Gastrocnemius medialis (tissue), 4 donors: ENCODE measurements at regions of chr18 and their contacts with region 1.

Region 1: DNA sequence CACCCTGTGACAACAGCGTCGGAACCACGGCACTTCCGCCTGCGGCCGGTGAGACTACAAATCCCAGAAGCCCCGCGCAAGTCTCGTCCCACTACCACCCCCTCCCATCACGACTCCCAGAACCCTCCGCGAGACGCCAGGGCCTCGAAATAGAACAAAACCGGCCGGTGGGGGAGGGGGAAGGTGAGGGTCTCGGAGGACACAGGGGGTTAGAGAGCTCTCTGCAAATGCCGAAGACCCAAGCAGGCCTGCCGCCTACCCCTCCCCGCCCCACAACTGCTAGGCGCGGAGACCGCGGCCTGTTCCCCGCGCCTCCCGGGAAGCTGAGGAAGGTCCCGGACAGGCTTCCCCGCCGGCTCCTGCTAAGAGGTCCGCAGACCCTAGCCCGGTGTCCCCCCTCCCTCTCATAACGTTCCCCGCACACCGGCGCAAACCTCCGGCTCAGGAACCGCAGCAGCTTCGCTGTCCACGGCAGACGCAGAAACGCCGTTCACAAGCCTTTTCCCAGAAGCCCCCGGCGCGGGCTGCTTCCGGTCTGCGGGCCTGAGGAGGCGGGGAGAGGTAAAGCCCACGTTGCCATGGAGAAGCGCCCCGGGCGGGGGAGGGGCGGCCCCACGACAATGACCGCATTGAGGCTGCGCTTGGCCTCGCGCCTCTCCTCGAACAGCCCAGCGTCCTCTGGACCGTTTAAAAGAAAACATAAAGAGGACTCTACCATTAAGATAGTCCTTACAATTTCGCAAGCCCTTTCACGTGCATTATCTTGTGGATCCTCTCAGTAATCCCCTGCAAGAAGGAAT is at the start of gene ZNF24:
- DNase-seq: peak; percentile 93 to 94
- ATAC-seq: peak; percentile 95
- H3K4me3 ChIP-seq: peak within 1 kb of the TSS; percentile 67 to 100 (median 92)
- H3K27ac ChIP-seq: peak within 1 kb of the TSS; percentile 99 to 100 (median 99)
- H3K4me1 ChIP-seq: peaks cover 48 to 51% of the 10 kb centered on the region in 2 donors
- H3K27me3 ChIP-seq: no peaks in the 10 kb centered on the region
- CTCF ChIP-seq: no peak
- POLR2A ChIP-seq: peak; percentile 79 to 83
- total RNA-seq, gene ZNF24: 30.5 to 50.7 (median 36.3) TPM

Region 2: GRCh38 chr18:34999756-35000289 is 344.3 kb before region 1 on chr18:
- in situ Hi-C with region 1: loop called in 1 of 4 experiments (anchors 10 kb)
- intact Hi-C with region 1: loop called (anchors 10 kb)
- DNase-seq: peak in 1 of 2 donors; percentile 27
- ATAC-seq: peak; percentile 72 to 87
- H3K4me3 ChIP-seq: no peak overlapping the region
- H3K27ac ChIP-seq: peak overlapping the region; percentile 61 to 75 (median 68)
- H3K4me1 ChIP-seq: peaks cover 17 to 22% of the 10 kb centered on the region in 2 donors
- H3K27me3 ChIP-seq: no peaks in the 10 kb centered on the region
- CTCF ChIP-seq: no peak
- POLR2A ChIP-seq: no peak

Region 3: GRCh38 chr18:35231052-35231451 is 113.1 kb before region 1 on chr18:
- in situ Hi-C with region 1: loop called in 1 of 4 experiments (anchors 5 kb)
- intact Hi-C with region 1: no loop called
- DNase-seq: peak; percentile 65 to 77
- ATAC-seq: peak; percentile 99
- H3K4me3 ChIP-seq: peak overlapping the region; percentile 16 to 49 (median 28)
- H3K27ac ChIP-seq: no peak overlapping the region
- H3K4me1 ChIP-seq: no peaks in the 10 kb centered on the region
- H3K27me3 ChIP-seq: no peaks in the 10 kb centered on the region
- CTCF ChIP-seq: peak; percentile 80 to 96 (median 83)
- POLR2A ChIP-seq: no peak

Region 4: DNA sequence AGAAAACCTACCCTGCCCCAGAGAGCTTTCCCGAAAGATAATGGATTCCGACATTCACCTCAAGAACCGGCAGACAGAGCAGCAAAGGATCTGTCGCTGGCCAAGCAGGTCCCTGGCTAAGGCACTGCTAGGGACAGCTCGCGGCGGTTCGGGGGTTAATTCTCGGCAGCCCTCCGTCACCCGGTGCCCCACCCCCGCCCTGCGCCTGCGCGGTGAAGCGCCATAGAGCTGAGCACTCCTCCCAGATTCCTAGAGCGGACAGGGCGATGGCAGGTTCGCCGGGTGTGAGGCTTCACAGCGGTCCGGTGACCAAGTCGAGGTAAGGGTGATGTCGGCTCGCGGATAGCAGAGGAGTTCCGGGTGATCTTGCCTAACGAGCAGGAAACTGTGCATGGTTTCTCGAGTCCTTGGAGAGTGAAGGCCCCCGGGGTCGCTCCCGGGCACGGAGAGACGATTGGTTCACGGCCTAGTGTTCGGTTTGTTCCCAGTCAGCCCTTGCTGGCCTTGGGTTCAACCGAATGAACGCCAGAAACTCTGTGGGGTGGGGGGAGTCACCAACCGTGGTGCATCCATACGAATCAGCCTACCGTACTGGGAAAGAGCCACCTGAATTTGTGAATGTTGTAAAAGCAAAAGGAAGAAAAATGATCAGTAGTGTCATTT is 53.9 kb before region 1 on chr18 and contains the start of gene ZSCAN30:
- in situ Hi-C with region 1: loop called in 2 of 4 experiments (anchors 5 to 10 kb)
- intact Hi-C with region 1: loop called (anchors 2 kb)
- DNase-seq: peak; percentile 88 to 95
- ATAC-seq: peak; percentile 98
- H3K4me3 ChIP-seq: peak within 1 kb of the TSS; percentile 62 to 88 (median 80)
- H3K27ac ChIP-seq: peak within 1 kb of the TSS; percentile 88 to 92 (median 90)
- H3K4me1 ChIP-seq: peaks cover 21 to 30% of the 10 kb centered on the region in 2 donors
- H3K27me3 ChIP-seq: no peaks in the 10 kb centered on the region
- CTCF ChIP-seq: peak in 1 of 5 experiments; percentile 24
- POLR2A ChIP-seq: peak; percentile 51 to 60
- total RNA-seq, gene ZSCAN30: 4.6 to 34.6 (median 8.2) TPM

Region 5: DNA sequence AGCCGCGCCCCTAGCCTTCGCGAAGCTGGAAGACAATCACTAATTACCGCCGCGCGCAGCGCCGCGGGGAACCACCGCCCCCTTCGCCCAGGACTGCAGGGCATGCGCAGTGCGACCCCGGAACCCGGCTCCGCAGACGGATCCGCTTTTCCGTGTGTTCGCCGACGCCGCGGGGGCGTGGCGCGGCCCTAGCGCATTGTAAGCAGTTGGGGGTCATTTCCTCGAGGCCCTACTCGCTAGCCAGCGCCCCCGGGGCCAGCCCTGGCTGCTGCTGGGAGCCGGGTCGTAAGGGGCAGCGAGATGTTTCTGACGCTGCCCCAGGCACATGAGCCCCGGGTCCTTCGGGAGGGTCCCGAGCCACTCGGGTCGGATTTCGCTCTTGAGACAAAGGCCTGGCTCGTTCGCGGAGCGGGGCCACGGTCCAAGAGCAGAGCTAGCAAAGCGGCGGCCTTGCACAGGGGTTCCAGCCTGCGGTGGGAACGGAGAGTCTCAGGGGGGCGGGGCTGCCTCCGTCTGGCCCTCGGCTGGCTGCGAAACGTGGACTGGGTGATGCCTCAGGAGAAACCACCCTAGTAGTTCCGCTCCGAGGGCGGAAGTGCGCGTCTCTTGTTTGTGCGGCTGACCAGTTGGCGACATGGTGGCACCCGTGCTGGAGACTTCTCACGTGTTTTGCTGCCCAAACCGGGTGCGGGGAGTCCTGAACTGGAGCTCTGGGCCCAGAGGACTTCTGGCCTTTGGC is 785.3 kb after region 1 on chr18 and contains the starts of genes ELP2 and SLC39A6:
- in situ Hi-C with region 1: no loop called
- intact Hi-C with region 1: loop called (anchors 2 kb)
- DNase-seq: peak; percentile 96 to 98
- ATAC-seq: peak; percentile 96 to 97
- H3K4me3 ChIP-seq: peak within 1 kb of the TSS; percentile 93 to 100 (median 97)
- H3K27ac ChIP-seq: peak within 1 kb of the TSS; percentile 99 to 100 (median 100)
- H3K4me1 ChIP-seq: peaks cover 23 to 30% of the 10 kb centered on the region in 2 donors
- H3K27me3 ChIP-seq: no peaks in the 10 kb centered on the region
- CTCF ChIP-seq: no peak
- POLR2A ChIP-seq: peak; percentile 68 to 72
- total RNA-seq, gene ELP2: 23.7 to 51.0 (median 42.8) TPM
- total RNA-seq, gene SLC39A6: 16.7 to 24.7 (median 18.3) TPM